HCT116 (cell line): ENCODE measurements at regions of chr14 and their contacts with region 1.

Region 1: DNA sequence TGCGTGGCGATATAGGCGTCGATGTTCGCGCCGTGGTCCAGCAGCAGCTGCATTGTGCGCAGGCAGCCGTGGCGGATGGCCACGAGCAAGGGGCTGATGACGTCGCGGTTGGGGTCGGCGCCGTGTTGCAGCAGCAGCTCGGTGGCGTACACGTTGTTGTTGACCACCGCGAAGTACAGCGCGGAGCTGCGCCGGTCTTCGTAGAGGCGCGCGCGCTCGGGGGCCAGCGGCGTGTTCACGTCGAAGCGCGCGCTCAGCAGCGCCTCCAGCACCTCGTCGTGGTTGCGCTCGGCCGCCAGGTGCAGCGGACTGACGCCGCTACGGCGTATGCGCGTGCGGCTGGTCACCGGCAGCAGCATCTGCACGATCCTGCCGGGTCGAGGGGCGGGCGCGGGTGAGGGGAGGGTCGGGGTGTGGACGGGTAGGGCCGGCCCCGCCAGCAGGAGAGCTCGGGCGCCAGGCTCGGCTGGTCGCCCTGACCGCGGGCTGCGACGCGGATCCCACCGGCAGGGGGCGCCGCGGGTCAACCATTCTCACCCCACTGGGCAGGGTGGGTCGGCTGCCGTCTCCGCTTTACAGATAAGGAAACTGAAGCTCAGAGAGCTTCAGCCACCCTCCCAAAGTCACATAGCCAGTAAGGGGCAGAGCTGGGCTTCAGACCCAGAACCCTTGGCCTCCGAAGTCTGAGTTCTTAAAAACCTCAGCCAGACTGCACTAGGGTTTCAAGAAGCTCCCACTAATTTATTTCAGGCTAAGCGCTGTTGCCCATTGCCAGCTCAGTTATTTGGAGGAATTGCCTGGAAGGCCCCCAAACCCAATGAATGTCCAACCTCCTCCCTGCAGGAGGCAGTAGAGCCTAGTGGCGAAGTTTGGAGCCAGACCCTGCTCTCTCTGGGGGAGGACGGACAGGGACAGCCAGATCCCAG is 12.4 kb downstream of the FAM181A start:
- DNase-seq: peak; percentile 56
- ATAC-seq: peak; percentile 92
- H3K4me3 ChIP-seq: peak overlapping the region in 1 of 2 experiments; percentile 27; a peak in 2 of 4 replicates
- H3K27ac ChIP-seq: no peak overlapping the region
- H3K4me1 ChIP-seq: peaks cover 19 to 46% of the 10 kb centered on the region in 2 experiments
- H3K27me3 ChIP-seq: no peaks in the 10 kb centered on the region
- CTCF ChIP-seq: peak; percentile 52 to 95 (median 69)
- POLR2A ChIP-seq: no peak
- RAD21 ChIP-seq: peak; percentile 92

Region 2: GRCh38 chr14:93655078-93655750 is 284.4 kb before region 1 on chr14:
- CTCF ChIA-PET with region 1: interaction called, 11 read pairs
- POLR2A ChIA-PET with region 1: no interaction called
- RAD21 ChIA-PET with region 1: no interaction called
- intact Hi-C with region 1: no loop called
- DNase-seq: peak; percentile 48
- ATAC-seq: peak; percentile 90
- H3K4me3 ChIP-seq: no peak overlapping the region
- H3K27ac ChIP-seq: no peak overlapping the region
- H3K4me1 ChIP-seq: no peaks in the 10 kb centered on the region
- H3K27me3 ChIP-seq: peaks cover 12% of the 10 kb centered on the region
- CTCF ChIP-seq: peak; percentile 53 to 81 (median 71)
- POLR2A ChIP-seq: no peak
- RAD21 ChIP-seq: peak; percentile 82

Region 3: GRCh38 chr14:93953263-93953662 is 13.7 kb after region 1 on chr14:
- CTCF ChIA-PET with region 1: interaction called, 13 read pairs
- POLR2A ChIA-PET with region 1: interaction called, 3 read pairs
- RAD21 ChIA-PET with region 1: no interaction called
- intact Hi-C with region 1: no loop called
- DNase-seq: no peak
- ATAC-seq: peak; percentile 67
- H3K4me3 ChIP-seq: no peak overlapping the region
- H3K27ac ChIP-seq: no peak overlapping the region
- H3K4me1 ChIP-seq: peaks cover 12 to 62% of the 10 kb centered on the region in 2 experiments; a peak in 3 of 4 replicates
- H3K27me3 ChIP-seq: no peaks in the 10 kb centered on the region
- CTCF ChIP-seq: peak in 2 of 3 experiments; percentile 35 to 39; a peak in 4 of 6 replicates
- POLR2A ChIP-seq: no peak
- RAD21 ChIP-seq: no peak

Region 4: GRCh38 chr14:93984987-93985410 is 45.4 kb after region 1 on chr14:
- CTCF ChIA-PET with region 1: interaction called, 16 read pairs
- POLR2A ChIA-PET with region 1: no interaction called
- RAD21 ChIA-PET with region 1: no interaction called
- intact Hi-C with region 1: no loop called
- DNase-seq: peak; percentile 60
- ATAC-seq: peak; percentile 87
- H3K4me3 ChIP-seq: no peak overlapping the region
- H3K27ac ChIP-seq: no peak overlapping the region
- H3K4me1 ChIP-seq: peaks cover 15 to 29% of the 10 kb centered on the region in 2 experiments; a peak in 3 of 4 replicates
- H3K27me3 ChIP-seq: no peaks in the 10 kb centered on the region
- CTCF ChIP-seq: peak; percentile 27 to 72 (median 64); a peak in 5 of 6 replicates
- POLR2A ChIP-seq: no peak
- RAD21 ChIP-seq: peak; percentile 39; the same call in 1 of the 2 replicates

Region 5: GRCh38 chr14:94026173-94026888 is 86.8 kb after region 1 on chr14 and contains the start of gene OTUB2:
- CTCF ChIA-PET with region 1: interaction called, 21 read pairs
- POLR2A ChIA-PET with region 1: interaction called, 5 read pairs
- RAD21 ChIA-PET with region 1: interaction called, 4 to 6 read pairs
- intact Hi-C with region 1: no loop called
- DNase-seq: peak; percentile 97
- ATAC-seq: peak; percentile 83
- H3K4me3 ChIP-seq: peak within 1 kb of the TSS; percentile 49 to 66
- H3K27ac ChIP-seq: peak within 1 kb of the TSS; percentile 6; the same call in 1 of the 2 replicates
- H3K4me1 ChIP-seq: peaks cover 29 to 53% of the 10 kb centered on the region in 2 experiments
- H3K27me3 ChIP-seq: no peaks in the 10 kb centered on the region
- CTCF ChIP-seq: no peak
- POLR2A ChIP-seq: no peak
- RAD21 ChIP-seq: no peak
- total RNA-seq, gene OTUB2: 6.6 TPM

Region 6: DNA sequence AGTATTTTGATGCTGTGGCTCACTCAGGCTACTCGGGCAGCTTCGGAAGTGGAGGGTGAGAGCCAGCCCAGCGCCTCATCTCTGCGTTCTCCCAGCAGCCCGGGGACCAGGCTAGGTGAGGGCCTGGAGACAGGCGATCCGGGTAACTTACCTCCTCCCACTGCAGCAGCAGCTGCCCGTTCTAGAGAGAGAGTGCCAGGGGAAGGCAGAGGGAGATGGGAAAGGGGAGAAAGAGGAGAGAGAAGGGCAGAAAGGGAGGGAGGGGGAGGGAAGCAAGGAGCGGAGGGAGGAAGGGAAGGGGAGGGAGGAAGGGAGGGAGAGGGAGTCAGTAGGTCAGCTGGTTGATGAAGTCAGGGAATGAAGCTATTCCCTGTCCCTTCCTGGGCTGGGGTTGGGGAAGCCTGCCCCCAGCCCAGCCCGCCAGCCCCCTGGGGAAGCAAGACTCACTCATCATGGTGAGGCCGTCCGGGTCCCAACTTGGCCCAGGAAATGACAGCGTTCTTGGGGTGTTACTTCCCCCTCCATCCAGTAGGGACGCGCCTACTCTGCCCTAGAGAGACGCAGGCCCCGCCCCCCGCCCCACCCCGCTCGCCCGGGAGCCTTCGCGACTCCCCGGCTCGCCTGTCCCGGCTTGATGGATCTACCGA is 189.7 kb after region 1 on chr14 and contains the start of gene IFI27L2:
- CTCF ChIA-PET with region 1: interaction called, 11 read pairs
- POLR2A ChIA-PET with region 1: interaction called, 4 read pairs
- RAD21 ChIA-PET with region 1: no interaction called
- intact Hi-C with region 1: no loop called
- DNase-seq: peak; percentile 59
- ATAC-seq: peak; percentile 93
- H3K4me3 ChIP-seq: peak within 1 kb of the TSS; percentile 69 to 82
- H3K27ac ChIP-seq: peak within 1 kb of the TSS; percentile 40
- H3K4me1 ChIP-seq: peaks cover 6 to 22% of the 10 kb centered on the region in 2 experiments; a peak in 3 of 4 replicates
- H3K27me3 ChIP-seq: no peaks in the 10 kb centered on the region
- CTCF ChIP-seq: peak in 2 of 3 experiments; percentile 16 to 23; a peak in 1 of 6 replicates
- POLR2A ChIP-seq: no peak
- RAD21 ChIP-seq: no peak
- total RNA-seq, gene IFI27L2: 42.9 TPM

Region 7: GRCh38 chr14:94180655-94181271 is 241.2 kb after region 1 on chr14:
- CTCF ChIA-PET with region 1: interaction called, 7 read pairs
- POLR2A ChIA-PET with region 1: no interaction called
- RAD21 ChIA-PET with region 1: no interaction called
- intact Hi-C with region 1: loop called (anchors 1 kb)
- DNase-seq: peak; percentile 35
- ATAC-seq: peak; percentile 89
- H3K4me3 ChIP-seq: 0 out of 4 replicates have a peak overlapping the region, but pooled peaks of 1 of the 2 experiments have one; percentile 8
- H3K27ac ChIP-seq: no peak overlapping the region
- H3K4me1 ChIP-seq: peaks cover 0 to 12% of the 10 kb centered on the region in 2 experiments; a peak in 3 of 4 replicates
- H3K27me3 ChIP-seq: no peaks in the 10 kb centered on the region
- CTCF ChIP-seq: peak; percentile 48 to 71 (median 67)
- POLR2A ChIP-seq: no peak
- RAD21 ChIP-seq: peak; percentile 73